CD4-positive, alpha-beta T cell (primary cell): ENCODE measurements at regions of chr3 and their contacts with region 1.

Region 1: DNA sequence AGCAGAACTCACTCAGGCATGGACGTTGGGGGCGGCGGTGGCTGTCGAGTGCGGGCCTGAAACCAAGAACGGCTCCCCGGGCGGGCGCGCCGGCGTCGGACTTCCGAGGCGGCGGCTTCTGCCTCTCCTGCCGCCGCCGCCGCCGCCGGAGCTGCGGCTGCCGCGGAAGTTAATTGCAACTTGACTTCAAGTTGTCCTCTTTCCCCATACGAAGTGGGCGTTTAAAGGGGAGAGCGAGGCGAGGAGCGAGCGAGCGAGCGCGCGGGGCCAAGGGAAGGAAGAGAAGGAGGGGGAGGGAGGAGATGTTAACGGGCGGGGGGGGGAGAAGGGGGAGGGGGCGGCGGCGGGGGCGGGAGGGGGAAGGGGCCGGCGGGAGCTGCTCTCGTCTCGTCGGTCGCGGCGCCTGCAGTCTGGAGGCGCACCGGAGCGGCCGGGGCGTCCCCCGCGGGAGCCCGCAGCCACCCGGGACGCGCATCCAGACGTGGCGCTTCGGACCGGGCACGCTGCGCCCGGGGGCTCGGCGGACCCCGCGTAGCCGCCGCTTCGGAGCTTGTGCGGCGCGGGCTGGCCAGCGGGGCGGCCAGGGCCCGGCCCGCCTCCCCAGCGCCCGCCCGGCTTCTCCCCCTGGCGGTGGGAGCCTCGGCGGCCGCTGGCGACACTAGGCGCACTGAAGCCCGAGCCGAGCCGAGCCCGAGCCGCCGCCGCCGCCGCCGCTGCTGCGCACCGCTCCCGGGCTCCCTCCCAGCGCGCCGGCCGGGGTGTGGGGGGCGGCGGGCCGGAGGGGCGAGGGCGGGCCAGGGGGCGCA is 19.7 kb upstream of the SATB1 start:
- DNase-seq: peak; percentile 61 to 91 (median 76)
- ATAC-seq: peak; percentile 60
- H3K4me3 ChIP-seq: peak overlapping the region; percentile 80
- H3K4me3 Mint-ChIP-seq: peak overlapping the region; percentile 96
- H3K27ac ChIP-seq: peak overlapping the region; percentile 75 to 86
- H3K27ac Mint-ChIP-seq: peak overlapping the region; percentile 97
- H3K4me1 ChIP-seq: peaks cover 24% of the 10 kb centered on the region
- H3K4me1 Mint-ChIP-seq: peaks cover 62% of the 10 kb centered on the region
- H3K27me3 ChIP-seq: no peaks in the 10 kb centered on the region
- H3K27me3 Mint-ChIP-seq: no peaks in the 10 kb centered on the region
- CTCF ChIP-seq: no peak

Region 2: GRCh38 chr3:17278006-17278405 is 1166.8 kb before region 1 on chr3:
- CTCF ChIA-PET with region 1: no interaction called
- POLR2A ChIA-PET with region 1: no interaction called
- intact Hi-C with region 1: no loop called
- DNase-seq: no peak
- ATAC-seq: no peak
- H3K4me3 ChIP-seq: no peak overlapping the region
- H3K4me3 Mint-ChIP-seq: no peak overlapping the region
- H3K27ac ChIP-seq: no peak overlapping the region
- H3K27ac Mint-ChIP-seq: no peak overlapping the region
- H3K4me1 ChIP-seq: no peaks in the 10 kb centered on the region
- H3K4me1 Mint-ChIP-seq: no peaks in the 10 kb centered on the region
- H3K27me3 ChIP-seq: no peaks in the 10 kb centered on the region
- H3K27me3 Mint-ChIP-seq: no peaks in the 10 kb centered on the region
- CTCF ChIP-seq: no peak

Region 3: GRCh38 chr3:18401300-18401961 is 43.4 kb before region 1 on chr3:
- CTCF ChIA-PET with region 1: interaction called, 5 read pairs
- POLR2A ChIA-PET with region 1: interaction called, 18 read pairs
- intact Hi-C with region 1: loop called (anchors 5 kb)
- DNase-seq: no peak
- ATAC-seq: peak; percentile 45
- H3K4me3 ChIP-seq: peak overlapping the region; percentile 2
- H3K4me3 Mint-ChIP-seq: peak overlapping the region; percentile 81
- H3K27ac ChIP-seq: peak overlapping the region; percentile 8 to 31
- H3K27ac Mint-ChIP-seq: peak overlapping the region; percentile 82
- H3K4me1 ChIP-seq: peaks cover 9% of the 10 kb centered on the region
- H3K4me1 Mint-ChIP-seq: peaks cover 100% of the 10 kb centered on the region
- H3K27me3 ChIP-seq: no peaks in the 10 kb centered on the region
- H3K27me3 Mint-ChIP-seq: no peaks in the 10 kb centered on the region
- CTCF ChIP-seq: no peak

Region 4: GRCh38 chr3:18489939-18490338 is 45.1 kb after region 1 on chr3:
- CTCF ChIA-PET with region 1: no interaction called
- POLR2A ChIA-PET with region 1: interaction called, 4 read pairs
- intact Hi-C with region 1: loop called in 1 of 2 experiments (anchors 5 kb)
- DNase-seq: peak in 8 of 14 experiments; percentile 1 to 66 (median 28)
- ATAC-seq: no peak
- H3K4me3 ChIP-seq: no peak overlapping the region
- H3K4me3 Mint-ChIP-seq: peak overlapping the region; percentile 61
- H3K27ac ChIP-seq: no peak overlapping the region
- H3K27ac Mint-ChIP-seq: peak overlapping the region; percentile 55
- H3K4me1 ChIP-seq: peaks cover 5% of the 10 kb centered on the region
- H3K4me1 Mint-ChIP-seq: peaks cover 44% of the 10 kb centered on the region
- H3K27me3 ChIP-seq: no peaks in the 10 kb centered on the region
- H3K27me3 Mint-ChIP-seq: no peaks in the 10 kb centered on the region
- CTCF ChIP-seq: no peak

Region 5: GRCh38 chr3:18559331-18559842 is 114.6 kb after region 1 on chr3:
- CTCF ChIA-PET with region 1: no interaction called
- POLR2A ChIA-PET with region 1: interaction called, 5 read pairs
- intact Hi-C with region 1: loop called (anchors 1 to 5 kb)
- DNase-seq: peak in 10 of 14 experiments; percentile 6 to 72 (median 28)
- ATAC-seq: peak; percentile 60
- H3K4me3 ChIP-seq: no peak overlapping the region
- H3K4me3 Mint-ChIP-seq: peak overlapping the region; percentile 48
- H3K27ac ChIP-seq: no peak overlapping the region
- H3K27ac Mint-ChIP-seq: peak overlapping the region; percentile 45
- H3K4me1 ChIP-seq: peaks cover 13% of the 10 kb centered on the region
- H3K4me1 Mint-ChIP-seq: peaks cover 57% of the 10 kb centered on the region
- H3K27me3 ChIP-seq: no peaks in the 10 kb centered on the region
- H3K27me3 Mint-ChIP-seq: no peaks in the 10 kb centered on the region
- CTCF ChIP-seq: peak; percentile 81

Region 6: GRCh38 chr3:18751514-18751913 is 306.7 kb after region 1 on chr3:
- CTCF ChIA-PET with region 1: no interaction called
- POLR2A ChIA-PET with region 1: interaction called, 3 read pairs
- intact Hi-C with region 1: loop called in 1 of 2 experiments (anchors 2 kb)
- DNase-seq: no peak
- ATAC-seq: no peak
- H3K4me3 ChIP-seq: no peak overlapping the region
- H3K4me3 Mint-ChIP-seq: no peak overlapping the region
- H3K27ac ChIP-seq: no peak overlapping the region
- H3K27ac Mint-ChIP-seq: peak overlapping the region; percentile 65
- H3K4me1 ChIP-seq: no peaks in the 10 kb centered on the region
- H3K4me1 Mint-ChIP-seq: peaks cover 83% of the 10 kb centered on the region
- H3K27me3 ChIP-seq: no peaks in the 10 kb centered on the region
- H3K27me3 Mint-ChIP-seq: no peaks in the 10 kb centered on the region
- CTCF ChIP-seq: no peak